Activated B cell treated with CpG ODN at 0.5 μM for 24 hours (primary cell): ENCODE measurements at regions of chr13 and their contacts with region 1.

Region 1: DNA sequence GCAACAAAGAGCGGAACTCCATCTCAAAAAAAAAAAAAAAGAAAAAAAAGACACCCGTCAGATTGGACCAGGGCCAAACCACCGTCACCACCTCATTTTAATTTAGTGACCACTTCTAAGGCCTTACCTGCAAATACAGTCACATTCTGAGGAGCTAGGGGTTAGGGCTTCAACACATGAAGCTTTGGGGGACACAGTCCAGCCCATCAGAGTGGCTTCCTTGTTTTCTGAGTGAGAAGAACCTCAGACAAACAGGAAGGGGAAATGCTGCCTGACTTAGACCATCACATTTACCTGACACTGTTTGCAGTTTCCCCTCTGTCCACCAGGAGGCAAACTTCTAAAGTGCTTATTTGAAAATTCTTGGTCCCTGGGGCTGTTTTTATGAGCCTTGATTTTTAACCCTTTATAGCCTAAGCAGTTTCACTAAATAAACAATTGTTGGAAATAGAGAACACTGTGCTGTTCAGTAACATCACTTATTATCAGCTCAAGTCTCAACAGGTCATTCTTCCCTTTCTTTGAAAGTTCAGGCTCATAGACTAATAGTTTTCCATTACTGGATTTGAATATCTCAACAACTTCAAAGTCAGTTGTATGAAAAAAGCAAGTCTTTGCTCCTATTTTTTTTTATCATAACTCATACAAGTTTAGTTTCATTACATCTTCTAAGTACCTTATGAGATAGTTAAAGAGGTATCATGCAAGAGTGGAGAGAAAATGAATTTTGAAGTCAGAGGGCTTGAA is 74.9 kb upstream of the WASF3 start:
- DNase-seq: no peak
- ATAC-seq: peak; percentile 82
- H3K4me3 Mint-ChIP-seq: peak overlapping the region; percentile 48
- H3K27ac Mint-ChIP-seq: no peak overlapping the region
- H3K4me1 Mint-ChIP-seq: peaks cover 6% of the 10 kb centered on the region
- H3K27me3 Mint-ChIP-seq: peaks cover 2% of the 10 kb centered on the region
- CTCF ChIP-seq: no peak

Region 2: GRCh38 chr13:26253787-26254582 is 228.6 kb before region 1 on chr13 and contains the start of gene CDK8:
- CTCF ChIA-PET with region 1: no interaction called
- POLR2A ChIA-PET with region 1: no interaction called
- intact Hi-C with region 1: loop called (anchors 5 kb)
- DNase-seq: peak; percentile 87
- ATAC-seq: peak; percentile 86
- H3K4me3 Mint-ChIP-seq: peak within 1 kb of the TSS; percentile 92
- H3K27ac Mint-ChIP-seq: peak within 1 kb of the TSS; percentile 88
- H3K4me1 Mint-ChIP-seq: peaks cover 36% of the 10 kb centered on the region
- H3K27me3 Mint-ChIP-seq: no peaks in the 10 kb centered on the region
- CTCF ChIP-seq: no peak
- total RNA-seq, gene CDK8: 10.9 and 12.8 TPM in 2 replicates

Region 3: GRCh38 chr13:26589754-26590153 is 107.1 kb after region 1 on chr13:
- CTCF ChIA-PET with region 1: no interaction called
- POLR2A ChIA-PET with region 1: no interaction called
- intact Hi-C with region 1: no loop called
- DNase-seq: no peak
- ATAC-seq: no peak
- H3K4me3 Mint-ChIP-seq: no peak overlapping the region
- H3K27ac Mint-ChIP-seq: no peak overlapping the region
- H3K4me1 Mint-ChIP-seq: no peaks in the 10 kb centered on the region
- H3K27me3 Mint-ChIP-seq: peaks cover 8% of the 10 kb centered on the region
- CTCF ChIP-seq: no peak

Region 4: DNA sequence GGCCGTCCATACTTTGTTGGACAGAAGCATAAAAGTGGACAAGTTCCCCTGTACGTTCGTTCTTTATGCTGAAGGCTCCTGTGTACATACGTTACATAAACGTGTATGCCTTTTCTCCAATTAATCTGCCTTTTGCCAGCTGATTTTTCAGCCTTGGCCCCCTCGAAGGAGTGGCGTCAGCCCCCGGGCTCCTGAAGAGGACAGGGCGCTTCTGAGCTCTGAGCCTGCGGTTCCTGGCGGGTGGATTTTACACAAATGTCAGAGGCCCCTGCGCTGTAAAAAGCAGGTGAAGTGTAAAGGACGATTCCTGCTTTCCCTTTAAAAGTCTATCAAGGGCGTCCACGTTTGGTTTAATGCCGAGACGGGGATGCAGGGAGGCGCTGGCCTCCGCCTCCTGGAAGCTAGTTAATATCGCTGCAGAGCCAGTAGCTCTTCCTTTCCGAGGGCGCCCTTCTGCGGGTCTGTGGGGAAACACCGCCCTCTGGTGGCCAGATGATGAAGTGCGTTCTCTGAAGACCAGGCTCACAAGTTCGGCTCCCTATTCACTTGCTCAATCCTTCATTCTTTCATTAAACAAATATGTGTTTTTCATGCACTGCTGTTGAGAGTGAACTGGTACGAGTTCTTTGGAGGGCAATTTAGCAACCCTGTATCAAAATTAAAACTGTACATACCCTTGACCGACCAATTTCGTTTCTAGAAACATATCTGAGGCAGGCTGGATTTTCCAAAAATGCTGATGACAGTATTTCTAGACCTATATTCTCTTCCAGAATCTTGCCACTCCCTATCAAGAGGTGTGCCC is 216.0 kb after region 1 on chr13:
- CTCF ChIA-PET with region 1: interaction called, 15 read pairs
- POLR2A ChIA-PET with region 1: no interaction called
- intact Hi-C with region 1: loop called (anchors 1 kb)
- DNase-seq: peak; percentile 72
- ATAC-seq: peak; percentile 87
- H3K4me3 Mint-ChIP-seq: no peak overlapping the region
- H3K27ac Mint-ChIP-seq: no peak overlapping the region
- H3K4me1 Mint-ChIP-seq: peaks cover 4% of the 10 kb centered on the region
- H3K27me3 Mint-ChIP-seq: peaks cover 7% of the 10 kb centered on the region
- CTCF ChIP-seq: peak; percentile 30

Region 5: GRCh38 chr13:26785838-26786630 is 303.4 kb after region 1 on chr13:
- CTCF ChIA-PET with region 1: no interaction called
- POLR2A ChIA-PET with region 1: no interaction called
- intact Hi-C with region 1: loop called (anchors 5 kb)
- DNase-seq: peak; percentile 50
- ATAC-seq: peak; percentile 66
- H3K4me3 Mint-ChIP-seq: peak overlapping the region; percentile 86
- H3K27ac Mint-ChIP-seq: peak overlapping the region; percentile 80
- H3K4me1 Mint-ChIP-seq: peaks cover 22% of the 10 kb centered on the region
- H3K27me3 Mint-ChIP-seq: peaks cover 3% of the 10 kb centered on the region
- CTCF ChIP-seq: no peak